ENCODE measurements at regions of chr9 and their contacts with region 1.

Region 1: GRCh38 chr9:136944519-136945279 is at the starts of genes C8G and FBXW5:
- DNase-seq: peak; percentile 90
- H3K4me3 ChIP-seq: peak within 1 kb of the TSS; percentile 68 to 83 (median 77)
- H3K27ac ChIP-seq: peak within 1 kb of the TSS; percentile 59
- H3K4me1 ChIP-seq: peaks cover 13% of the 10 kb centered on the region
- H3K27me3 ChIP-seq: no peaks in the 10 kb centered on the region
- CTCF ChIP-seq: peak; percentile 78 to 98
- total RNA-seq, gene C8G: 0.50 to 2.8 TPM
- total RNA-seq, gene FBXW5: 79.7 to 107 TPM

Region 2: DNA sequence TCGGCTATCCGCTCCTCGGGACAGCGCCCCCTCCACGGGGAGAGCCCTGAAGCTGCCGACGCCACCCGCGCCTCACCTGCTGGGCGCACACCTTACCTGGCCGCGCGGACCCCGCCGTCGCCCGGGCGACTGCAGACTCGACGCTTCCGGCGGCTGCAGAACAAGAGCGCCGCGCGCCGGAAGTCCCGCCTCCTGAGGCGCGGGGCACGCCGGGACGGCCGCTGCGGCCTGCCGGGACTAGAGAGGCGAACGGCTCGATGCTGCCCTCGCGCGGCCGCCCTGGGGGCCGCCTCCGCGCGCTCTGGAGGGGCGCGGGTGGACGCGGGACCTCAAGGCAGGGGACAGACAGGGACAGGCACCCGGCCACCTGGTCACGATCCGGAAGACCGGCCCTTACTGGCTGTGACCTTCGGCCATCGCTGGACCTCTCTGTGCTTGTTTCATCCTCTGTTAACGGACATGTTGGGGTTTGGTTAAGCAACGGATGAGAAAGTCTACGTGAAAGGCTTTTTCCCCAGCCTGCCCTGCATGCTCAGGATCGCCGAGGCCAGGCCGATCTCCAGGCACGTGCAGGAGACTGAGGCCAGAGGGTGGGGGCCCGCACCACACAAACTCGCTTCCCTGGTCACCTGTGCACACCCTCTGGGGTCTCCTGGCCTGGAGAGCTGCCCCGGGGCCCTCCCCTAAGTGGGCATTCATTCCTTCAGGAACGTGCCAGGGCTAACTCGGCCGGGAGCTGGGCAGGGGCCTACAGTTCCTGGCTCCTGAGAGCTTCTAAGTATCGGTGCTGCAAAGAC is 544.5 kb before region 1 on chr9 and contains the start of gene SNAPC4:
- CTCF ChIA-PET with region 1: no interaction called
- dilution Hi-C with region 1: no loop called
- in situ Hi-C with region 1: no loop called
- intact Hi-C with region 1: no loop called
- DNase-seq: peak; percentile 78
- H3K4me3 ChIP-seq: peak within 1 kb of the TSS; percentile 84 to 97 (median 89)
- H3K27ac ChIP-seq: peak within 1 kb of the TSS; percentile 64
- H3K4me1 ChIP-seq: peaks cover 15% of the 10 kb centered on the region
- H3K27me3 ChIP-seq: no peaks in the 10 kb centered on the region
- CTCF ChIP-seq: peak; percentile 72 to 79
- total RNA-seq, gene SNAPC4: 7.0 to 9.2 TPM

Region 3: DNA sequence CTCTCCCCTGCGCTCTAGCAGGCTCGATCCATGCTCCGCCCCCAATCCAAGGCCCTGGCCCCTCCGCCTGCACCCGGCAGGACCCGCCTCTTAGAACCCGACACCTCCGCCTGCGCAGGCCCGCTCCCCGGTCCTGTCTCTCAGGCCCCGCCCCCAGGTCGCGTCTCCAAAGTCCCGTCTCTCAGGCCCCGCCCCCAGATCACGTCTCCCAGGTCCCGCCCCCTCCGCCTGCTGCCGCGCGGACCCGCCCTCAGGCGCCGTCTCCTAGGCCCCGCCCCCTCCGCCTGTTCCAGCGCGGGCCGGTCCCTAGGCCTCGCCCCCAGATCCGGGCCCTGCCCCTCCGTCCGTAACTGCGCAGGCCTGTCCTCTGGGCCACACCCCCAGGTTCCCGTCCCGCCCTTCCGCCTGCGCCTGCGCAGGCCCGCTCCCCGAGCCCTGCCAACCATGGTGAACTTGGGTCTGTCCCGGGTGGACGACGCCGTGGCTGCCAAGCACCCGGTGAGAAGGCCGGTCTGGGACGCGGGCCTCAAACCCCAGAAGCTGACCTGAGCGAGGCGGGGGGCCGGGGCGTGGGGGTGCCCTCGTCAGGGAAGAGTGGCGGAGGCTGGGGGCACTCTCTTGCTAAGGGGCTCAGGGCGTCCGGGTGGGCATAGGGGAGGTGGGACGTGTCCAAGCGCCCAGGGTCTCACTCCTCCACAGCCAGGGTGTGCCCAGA is 153.6 kb before region 1 on chr9 and contains the start of gene TMEM141:
- CTCF ChIA-PET with region 1: no interaction called
- dilution Hi-C with region 1: no loop called
- in situ Hi-C with region 1: no loop called
- intact Hi-C with region 1: loop called (anchors 5 kb)
- DNase-seq: peak; percentile 98
- H3K4me3 ChIP-seq: peak within 1 kb of the TSS; percentile 72 to 93 (median 77)
- H3K27ac ChIP-seq: peak within 1 kb of the TSS; percentile 88
- H3K4me1 ChIP-seq: peaks cover 18% of the 10 kb centered on the region
- H3K27me3 ChIP-seq: no peaks in the 10 kb centered on the region
- CTCF ChIP-seq: no peak
- total RNA-seq, gene TMEM141: 38.8 to 95.4 TPM

Region 4: GRCh38 chr9:136840140-136840687 is 104.5 kb before region 1 on chr9:
- CTCF ChIA-PET with region 1: no interaction called
- dilution Hi-C with region 1: no loop called
- in situ Hi-C with region 1: no loop called
- intact Hi-C with region 1: no loop called
- DNase-seq: no peak
- H3K4me3 ChIP-seq: no peak overlapping the region
- H3K27ac ChIP-seq: no peak overlapping the region
- H3K4me1 ChIP-seq: peaks cover 25% of the 10 kb centered on the region
- H3K27me3 ChIP-seq: peaks cover 5% of the 10 kb centered on the region
- CTCF ChIP-seq: no peak

Region 5: GRCh38 chr9:136858844-136859757 is 85.6 kb before region 1 on chr9:
- CTCF ChIA-PET with region 1: no interaction called
- dilution Hi-C with region 1: loop called (anchors 5 kb)
- in situ Hi-C with region 1: no loop called
- intact Hi-C with region 1: no loop called
- DNase-seq: peak; percentile 40
- H3K4me3 ChIP-seq: no peak overlapping the region
- H3K27ac ChIP-seq: no peak overlapping the region
- H3K4me1 ChIP-seq: peaks cover 12% of the 10 kb centered on the region
- H3K27me3 ChIP-seq: no peaks in the 10 kb centered on the region
- CTCF ChIP-seq: no peak

Region 6: DNA sequence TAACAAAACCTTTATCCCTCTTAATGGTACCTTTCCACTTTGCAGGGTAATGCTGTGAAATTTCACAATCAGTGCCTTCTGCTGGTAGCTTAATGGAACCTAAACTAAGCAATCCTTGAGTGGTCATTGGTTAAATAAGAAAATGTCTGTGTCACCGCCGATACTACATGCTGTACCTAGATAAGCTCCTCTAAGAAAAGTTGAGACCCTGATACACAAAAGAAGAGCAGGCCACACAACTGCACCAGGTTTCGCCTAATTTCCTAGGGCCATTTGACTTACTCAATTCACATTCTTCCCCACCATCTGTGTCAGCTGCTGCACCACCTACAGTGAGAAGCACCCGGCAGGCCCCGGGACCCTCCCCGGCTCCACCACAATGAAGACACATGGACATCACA is 69.5 kb before region 1 on chr9:
- CTCF ChIA-PET with region 1: no interaction called
- dilution Hi-C with region 1: no loop called
- in situ Hi-C with region 1: no loop called
- intact Hi-C with region 1: no loop called
- DNase-seq: no peak
- H3K4me3 ChIP-seq: no peak overlapping the region
- H3K27ac ChIP-seq: no peak overlapping the region
- H3K4me1 ChIP-seq: no peaks in the 10 kb centered on the region
- H3K27me3 ChIP-seq: no peaks in the 10 kb centered on the region
- CTCF ChIP-seq: no peak

Region 7: DNA sequence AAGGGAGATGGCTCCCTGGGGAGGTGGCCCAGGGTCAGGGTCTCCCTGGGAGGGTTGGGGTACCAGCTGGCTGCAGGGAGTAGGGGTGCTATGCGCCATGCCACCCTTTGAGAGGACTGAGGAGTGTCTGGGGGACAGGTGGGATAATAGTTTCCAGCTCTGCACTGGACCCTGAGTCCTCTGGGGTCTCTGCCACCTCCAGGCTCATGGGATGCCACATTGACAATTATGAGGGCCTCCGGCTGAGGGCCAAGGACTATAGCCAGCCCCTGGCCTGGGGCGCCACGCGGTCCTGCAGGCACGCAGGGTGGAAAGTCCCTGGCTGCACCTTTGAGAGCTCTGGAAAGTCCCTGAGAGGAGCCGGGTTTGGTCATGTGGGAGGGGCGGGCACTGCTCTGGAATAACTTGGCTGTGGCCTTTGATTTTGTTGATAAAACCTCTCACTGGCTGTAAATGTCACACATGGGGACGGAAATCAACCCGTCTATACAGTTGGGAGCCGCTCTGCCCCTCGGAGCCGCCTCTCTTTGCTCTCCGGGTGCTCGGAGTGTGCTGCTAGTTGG is 42.4 kb before region 1 on chr9:
- CTCF ChIA-PET with region 1: no interaction called
- dilution Hi-C with region 1: no loop called
- in situ Hi-C with region 1: no loop called
- intact Hi-C with region 1: loop called (anchors 2 kb)
- DNase-seq: peak; percentile 90
- H3K4me3 ChIP-seq: peak overlapping the region in 1 of 3 experiments; percentile 28
- H3K27ac ChIP-seq: peak overlapping the region; percentile 94
- H3K4me1 ChIP-seq: peaks cover 33% of the 10 kb centered on the region
- H3K27me3 ChIP-seq: no peaks in the 10 kb centered on the region
- CTCF ChIP-seq: no peak

Region 8: GRCh38 chr9:137034863-137035761 is 90.4 kb after region 1 on chr9:
- CTCF ChIA-PET with region 1: interaction called, 19 read pairs
- dilution Hi-C with region 1: no loop called
- in situ Hi-C with region 1: no loop called
- intact Hi-C with region 1: loop called (anchors 1 kb)
- DNase-seq: peak; percentile 68
- H3K4me3 ChIP-seq: no peak overlapping the region
- H3K27ac ChIP-seq: no peak overlapping the region
- H3K4me1 ChIP-seq: peaks cover 17% of the 10 kb centered on the region
- H3K27me3 ChIP-seq: no peaks in the 10 kb centered on the region
- CTCF ChIP-seq: peak; percentile 82 to 94